Posterior cingulate gyrus (tissue), 11 donors: ENCODE measurements at regions of chr19 and their contacts with region 1.

Region 1: DNA sequence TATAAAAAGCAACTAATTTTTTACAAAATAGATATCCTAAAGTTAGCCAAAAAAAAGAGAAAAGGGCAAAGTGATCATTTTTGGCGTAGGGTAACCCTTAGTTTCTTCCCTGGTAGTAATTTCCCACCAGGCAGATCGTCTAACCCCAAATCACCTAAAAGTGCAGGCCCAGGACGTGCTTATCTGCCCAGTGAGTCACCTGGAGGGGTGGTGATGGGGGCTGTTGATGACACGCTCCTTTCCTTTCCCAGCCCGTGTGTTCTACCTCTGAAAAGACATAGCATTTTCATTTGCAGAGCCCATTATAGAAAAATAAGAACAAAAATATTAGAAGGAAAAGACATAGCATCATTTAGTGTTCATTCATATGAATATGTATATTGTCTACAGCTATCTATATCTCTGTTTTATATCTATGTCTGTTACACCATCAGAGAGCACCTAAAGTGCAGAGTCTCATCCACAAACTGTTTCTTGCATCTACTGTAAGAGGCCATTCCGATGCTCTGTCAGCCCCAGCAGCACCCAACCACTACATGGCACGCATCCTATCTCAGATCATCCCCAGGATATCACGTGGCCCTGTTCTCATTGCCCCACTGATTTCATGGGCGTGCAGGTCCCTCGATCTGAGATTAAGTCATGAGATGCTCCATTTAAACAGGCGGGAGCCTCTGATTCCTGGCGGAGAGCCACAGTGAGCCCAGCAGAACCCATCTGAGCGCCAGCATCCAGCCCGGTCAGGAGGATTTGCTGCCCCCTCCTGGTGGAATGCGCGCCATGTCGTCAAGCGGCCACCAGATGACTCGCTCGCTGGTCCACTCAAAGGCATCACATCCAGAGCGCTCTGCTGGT is 8.5 kb upstream of the LILRB3 start:
- DNase-seq: peak; percentile 77 to 98 (median 90)

Region 2: DNA sequence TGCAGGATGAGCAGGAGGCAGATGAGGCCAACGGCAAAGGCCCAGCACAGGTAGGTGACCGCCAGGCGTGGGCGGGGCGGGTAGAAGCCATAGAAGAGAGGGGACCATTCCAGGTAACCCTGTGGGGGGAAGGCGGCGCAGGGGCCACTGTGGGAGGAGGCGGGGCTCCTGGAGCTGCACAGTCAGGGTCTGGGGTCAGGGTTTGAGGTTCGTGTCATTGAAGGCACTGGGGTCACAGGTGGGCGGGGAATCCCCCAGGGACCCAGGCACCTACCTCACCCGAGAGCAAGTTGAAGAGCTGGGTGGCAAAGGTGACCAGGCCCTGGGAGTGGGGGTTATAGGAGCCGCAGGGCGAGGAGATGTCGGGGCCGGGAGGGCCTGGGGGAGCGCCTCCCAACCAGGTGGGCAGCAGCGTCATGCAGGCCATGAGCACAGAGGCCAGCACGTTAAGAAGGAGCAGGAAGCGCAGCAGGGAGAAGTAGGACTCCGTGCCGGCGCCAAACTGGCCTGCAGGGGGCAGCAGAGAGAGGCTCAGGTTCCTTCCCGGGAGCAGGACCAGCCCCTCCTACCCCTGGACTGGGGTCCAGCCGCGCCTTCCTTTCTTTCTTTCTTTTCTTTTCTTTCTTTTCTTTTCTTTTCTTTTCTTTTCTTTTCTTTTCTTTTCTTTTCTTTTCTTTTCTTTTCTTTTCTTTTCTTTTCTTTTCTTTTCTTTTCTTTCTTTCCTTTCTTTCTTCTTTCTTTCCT is 63.0 kb before region 1 on chr19:
- intact Hi-C with region 1: loop called (anchors 1 kb)
- DNase-seq: peak; percentile 77 to 98 (median 96)

Region 3: GRCh38 chr19:54189735-54190502 is 41.4 kb before region 1 on chr19:
- intact Hi-C with region 1: loop called (anchors 5 kb)
- DNase-seq: peak; percentile 99 to 100 (median 100)

Region 4: DNA sequence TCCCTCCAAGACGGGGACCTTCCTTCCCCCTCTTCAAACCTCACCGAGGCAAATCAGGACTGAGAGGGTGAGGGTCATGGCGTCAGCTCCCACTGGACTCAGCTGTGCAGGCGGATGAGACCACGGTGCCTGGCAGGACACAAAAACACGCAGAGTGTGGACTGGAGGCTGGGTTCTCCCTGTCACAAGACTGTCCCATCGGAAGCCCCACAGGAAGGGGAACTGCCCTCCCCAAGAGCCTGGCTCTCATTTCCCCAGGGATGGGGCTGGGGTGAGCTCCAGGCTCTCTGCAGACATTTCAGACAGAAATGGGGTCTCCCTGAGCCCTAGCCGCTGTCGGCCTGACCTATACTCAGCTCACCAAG is 25.8 kb after region 1 on chr19 and contains the start of gene LILRB5:
- intact Hi-C with region 1: no loop called
- DNase-seq: peak in 1 of 10 donors; percentile 33